PC-3 (cell line): ENCODE measurements at regions of chr2 and their contacts with region 1.

Region 1: DNA sequence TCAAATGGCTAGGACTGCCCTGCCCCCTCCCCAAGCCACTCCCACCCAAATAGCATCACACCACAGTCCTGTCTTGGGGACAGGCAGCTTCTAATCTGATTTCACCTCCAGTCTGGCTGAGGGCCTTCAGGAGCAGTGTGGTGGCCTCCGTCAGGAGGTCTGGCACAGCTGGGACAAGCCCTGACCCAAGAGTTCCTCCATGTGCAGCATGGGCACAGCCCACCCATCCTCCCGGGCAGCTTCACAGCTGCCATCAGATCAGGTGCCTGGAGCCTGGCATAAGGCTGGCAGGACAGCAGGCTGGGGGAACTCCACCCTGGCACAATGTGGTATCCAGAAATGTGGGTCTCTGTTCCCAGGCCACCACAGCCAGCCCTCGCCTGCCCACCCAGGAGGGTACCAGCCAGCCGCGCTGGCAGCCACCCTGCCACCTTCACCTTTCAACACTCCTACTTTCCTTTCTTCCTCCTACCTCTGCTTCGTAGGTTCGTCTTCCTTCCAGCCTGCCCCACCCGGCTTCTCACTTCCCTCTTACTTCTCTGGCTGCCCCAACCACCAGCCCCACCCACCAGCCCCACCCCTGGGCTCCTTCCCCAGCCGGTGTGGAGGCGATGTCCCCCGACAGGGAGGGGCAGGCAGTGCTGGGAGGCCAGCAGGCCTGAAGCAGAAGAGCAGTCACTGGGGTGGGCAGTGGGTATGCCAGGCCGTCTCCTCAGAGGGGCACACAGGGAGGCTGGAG is at the start of gene CAPG:
- DNase-seq: peak; percentile 85
- ATAC-seq: peak; percentile 93
- H3K4me3 ChIP-seq: peak within 1 kb of the TSS; percentile 67
- H3K27ac ChIP-seq: peak within 1 kb of the TSS; percentile 80
- H3K4me1 ChIP-seq: peaks cover 27% of the 10 kb centered on the region
- H3K27me3 ChIP-seq: no peaks in the 10 kb centered on the region
- CTCF ChIP-seq: no peak
- total RNA-seq, gene CAPG: 221 and 260 TPM in 2 replicates

Region 2: GRCh38 chr2:84980263-84980983 is 429.6 kb before region 1 on chr2:
- CTCF ChIA-PET with region 1: no interaction called
- POLR2A ChIA-PET with region 1: interaction called, 13 read pairs
- intact Hi-C with region 1: no loop called
- DNase-seq: no peak
- ATAC-seq: no peak
- H3K4me3 ChIP-seq: no peak overlapping the region
- H3K27ac ChIP-seq: no peak overlapping the region
- H3K4me1 ChIP-seq: no peaks in the 10 kb centered on the region
- H3K27me3 ChIP-seq: no peaks in the 10 kb centered on the region
- CTCF ChIP-seq: no peak

Region 3: DNA sequence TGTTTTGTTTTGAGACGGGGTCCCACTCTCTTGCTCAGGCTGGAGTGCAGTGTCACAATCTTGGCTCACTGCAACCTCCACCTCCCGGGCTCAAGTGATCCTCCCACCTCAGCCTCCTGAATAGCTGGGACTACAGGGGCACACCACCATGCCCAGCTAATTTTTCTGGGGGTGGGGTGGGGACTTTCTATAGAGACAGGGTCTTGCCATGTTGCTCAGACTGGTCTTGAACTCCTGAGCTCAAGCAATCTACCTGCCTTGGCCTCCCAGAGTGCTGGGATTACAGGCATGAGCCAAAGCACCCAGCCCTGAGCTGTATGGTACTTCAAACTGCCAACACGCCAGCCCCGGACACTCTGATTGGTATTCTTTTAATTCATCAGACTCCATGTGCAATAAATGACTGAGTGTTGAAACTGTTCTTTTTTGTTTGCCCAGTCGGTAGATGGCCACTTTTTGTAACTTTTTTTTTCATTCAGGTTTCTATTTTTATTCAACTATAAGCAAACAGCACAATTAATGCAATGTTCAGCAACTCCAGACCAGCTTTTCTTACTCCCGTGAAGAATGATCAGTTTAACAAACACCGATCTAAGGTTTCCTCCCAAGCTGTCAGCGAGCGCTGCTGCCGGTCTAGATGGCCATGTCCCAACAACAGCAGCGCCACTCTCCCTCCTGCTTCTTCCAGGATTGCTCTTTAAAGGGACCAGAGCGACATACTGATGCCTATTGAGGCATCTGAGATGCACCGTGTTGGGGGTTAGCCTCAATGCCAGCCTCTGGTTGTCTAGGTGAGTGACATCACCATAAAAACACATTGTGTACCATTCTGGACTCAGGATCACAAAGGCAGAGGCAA is 69.8 kb before region 1 on chr2:
- CTCF ChIA-PET with region 1: no interaction called
- POLR2A ChIA-PET with region 1: no interaction called
- intact Hi-C with region 1: no loop called
- DNase-seq: no peak
- ATAC-seq: peak; percentile 76
- H3K4me3 ChIP-seq: no peak overlapping the region
- H3K27ac ChIP-seq: no peak overlapping the region
- H3K4me1 ChIP-seq: no peaks in the 10 kb centered on the region; the same call in 1 of the 2 replicates
- H3K27me3 ChIP-seq: no peaks in the 10 kb centered on the region
- CTCF ChIP-seq: no peak

Region 4: DNA sequence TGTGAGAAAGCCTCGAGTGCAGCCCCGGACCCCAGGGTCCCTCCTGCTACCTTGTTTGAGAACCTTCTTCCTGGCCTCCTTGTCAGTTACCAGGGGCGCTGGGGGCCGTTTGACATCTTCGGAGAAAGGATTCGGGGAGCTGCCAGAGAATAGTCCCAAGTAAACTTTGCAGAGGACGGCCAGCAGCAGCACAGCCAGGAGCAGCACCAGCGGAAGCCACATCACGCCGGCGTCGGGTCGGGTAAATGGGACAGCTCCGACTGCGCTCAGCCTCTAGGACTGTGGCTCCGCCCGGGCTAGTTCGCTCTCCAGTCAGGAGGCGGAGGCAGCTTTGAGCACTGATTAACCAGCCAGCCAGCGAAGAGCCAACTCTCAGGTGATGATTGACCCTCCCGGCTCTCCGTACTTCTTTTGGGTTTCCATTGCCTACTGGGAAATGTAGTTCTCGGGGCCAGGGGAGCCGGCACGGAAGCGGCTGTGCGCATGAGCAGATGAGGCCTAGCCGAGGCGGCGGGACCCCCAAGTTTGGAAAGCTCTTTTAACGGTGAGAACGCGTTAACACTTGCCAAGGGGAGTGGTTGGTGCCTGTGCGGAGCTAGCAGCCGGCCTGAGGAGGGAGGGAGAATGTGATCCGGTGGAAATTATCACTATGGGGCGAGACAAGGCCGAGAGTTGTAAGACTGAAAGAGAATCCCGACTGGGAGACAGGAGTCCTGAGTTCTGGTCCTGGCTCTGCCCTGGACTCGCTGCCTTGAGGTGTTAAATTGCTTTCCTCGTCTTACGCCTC is 55.5 kb before region 1 on chr2 and contains the starts of genes ELMOD3 and RETSAT:
- CTCF ChIA-PET with region 1: no interaction called
- POLR2A ChIA-PET with region 1: no interaction called
- intact Hi-C with region 1: loop called (anchors 5 kb)
- DNase-seq: peak; percentile 99
- ATAC-seq: peak; percentile 97
- H3K4me3 ChIP-seq: peak within 1 kb of the TSS; percentile 84
- H3K27ac ChIP-seq: peak within 1 kb of the TSS; percentile 61
- H3K4me1 ChIP-seq: peaks cover 32% of the 10 kb centered on the region
- H3K27me3 ChIP-seq: no peaks in the 10 kb centered on the region
- CTCF ChIP-seq: no peak
- total RNA-seq, gene ELMOD3: 16.7 and 19.0 TPM in 2 replicates
- total RNA-seq, gene RETSAT: 39.1 and 50.8 TPM in 2 replicates